K562 (cell line): ENCODE measurements at regions of chr2 and their contacts with region 1.

Region 1: DNA sequence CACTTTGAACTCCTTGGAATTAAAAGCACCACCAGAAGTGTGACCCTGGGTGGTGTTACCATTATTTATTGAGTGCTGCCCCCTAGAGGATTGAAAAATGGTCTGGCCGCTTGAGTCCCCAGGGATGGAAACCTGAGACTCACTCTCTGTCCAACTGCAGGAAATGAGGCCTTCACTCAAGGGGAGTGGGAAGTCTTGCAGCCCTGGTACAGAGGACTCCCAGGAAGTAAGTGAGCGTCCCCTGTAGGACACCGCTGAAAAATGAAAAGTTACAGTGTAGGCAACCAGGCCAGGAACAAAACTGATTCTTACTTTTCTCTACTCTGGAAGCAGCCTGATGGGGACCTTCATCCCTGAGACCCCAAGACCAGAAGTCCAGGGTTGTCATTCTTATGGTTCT is 2.2 kb upstream of the NRP2 start:
- DNase-seq: peak; percentile 31 to 54 (median 48)
- ATAC-seq: peak; percentile 91
- H3K4me3 ChIP-seq: no peak overlapping the region
- H3K27ac ChIP-seq: no peak overlapping the region
- H3K4me1 ChIP-seq: peaks cover 0 to 12% of the 10 kb centered on the region in 2 experiments; a peak in 2 of 5 replicates
- H3K27me3 ChIP-seq: peaks cover 3 to 28% of the 10 kb centered on the region in 2 experiments; a peak in 3 of 5 replicates
- CTCF ChIP-seq: peak; percentile 49 to 56 (median 51); a peak in 5 of 6 replicates
- EP300 ChIP-seq: no peak
- POLR2A ChIP-seq: no peak
- RAD21 ChIP-seq: peak; percentile 40 to 56

Region 2: GRCh38 chr2:204260162-204260877 is 1419.7 kb before region 1 on chr2:
- CTCF ChIA-PET with region 1: interaction called, 4 read pairs
- POLR2A ChIA-PET with region 1: no interaction called
- in situ Hi-C with region 1: loop called (anchors 25 kb)
- intact Hi-C with region 1: loop called (anchors 5 kb)
- DNase-seq: peak; percentile 62 to 72 (median 67)
- ATAC-seq: peak; percentile 89
- H3K4me3 ChIP-seq: no peak overlapping the region
- H3K27ac ChIP-seq: no peak overlapping the region
- H3K4me1 ChIP-seq: no peaks in the 10 kb centered on the region
- H3K27me3 ChIP-seq: peaks cover 0 to 7% of the 10 kb centered on the region in 2 experiments; a peak in 2 of 5 replicates
- CTCF ChIP-seq: peak; percentile 66 to 88 (median 77)
- EP300 ChIP-seq: no peak
- POLR2A ChIP-seq: no peak
- RAD21 ChIP-seq: peak; percentile 66 to 71

Region 3: DNA sequence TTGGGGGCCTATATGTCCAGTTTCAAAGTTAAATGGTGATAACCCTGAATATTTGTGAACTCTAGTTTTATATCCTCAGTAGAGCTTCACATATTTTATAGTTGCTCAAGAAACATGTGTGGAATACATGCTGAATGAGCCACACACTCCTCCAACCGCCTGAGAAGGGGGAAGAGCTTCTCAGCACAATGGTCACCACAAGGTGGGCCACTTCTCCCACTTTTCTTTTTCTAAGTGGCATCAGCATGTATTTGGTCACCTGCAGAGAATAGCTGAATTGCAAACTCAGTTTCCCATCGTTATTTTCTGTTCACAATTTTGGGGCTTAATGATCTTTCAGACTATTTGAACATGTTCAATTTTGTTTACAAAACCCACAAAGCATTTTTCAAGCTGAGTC is 794.3 kb before region 1 on chr2:
- CTCF ChIA-PET with region 1: interaction called, 4 read pairs
- POLR2A ChIA-PET with region 1: no interaction called
- in situ Hi-C with region 1: no loop called
- intact Hi-C with region 1: loop called (anchors 10 kb)
- DNase-seq: peak in 2 of 4 experiments; percentile 7 to 30
- ATAC-seq: peak; percentile 56; the same call in 1 of the 3 replicates
- H3K4me3 ChIP-seq: no peak overlapping the region
- H3K27ac ChIP-seq: no peak overlapping the region
- H3K4me1 ChIP-seq: no peaks in the 10 kb centered on the region
- H3K27me3 ChIP-seq: no peaks in the 10 kb centered on the region
- CTCF ChIP-seq: peak; percentile 16 to 34 (median 18); a peak in 2 of 6 replicates
- EP300 ChIP-seq: no peak
- POLR2A ChIP-seq: no peak
- RAD21 ChIP-seq: peak; percentile 36 to 62